GM12878 (cell line): ENCODE measurements at regions of chr14 and their contacts with region 1.

Region 1: GRCh38 chr14:100645192-100645990 is 58.2 kb upstream of the BEGAIN start:
- DNase-seq: peak; percentile 11
- ATAC-seq: peak; percentile 97
- H3K4me3 ChIP-seq: no peak overlapping the region
- H3K27ac ChIP-seq: no peak overlapping the region
- H3K4me1 ChIP-seq: peaks cover 6% of the 10 kb centered on the region
- H3K27me3 ChIP-seq: no peaks in the 10 kb centered on the region
- CTCF ChIP-seq: peak; percentile 73 to 90 (median 82)
- EP300 ChIP-seq: no peak
- POLR2A ChIP-seq: no peak
- RAD21 ChIP-seq: peak; percentile 79

Region 2: DNA sequence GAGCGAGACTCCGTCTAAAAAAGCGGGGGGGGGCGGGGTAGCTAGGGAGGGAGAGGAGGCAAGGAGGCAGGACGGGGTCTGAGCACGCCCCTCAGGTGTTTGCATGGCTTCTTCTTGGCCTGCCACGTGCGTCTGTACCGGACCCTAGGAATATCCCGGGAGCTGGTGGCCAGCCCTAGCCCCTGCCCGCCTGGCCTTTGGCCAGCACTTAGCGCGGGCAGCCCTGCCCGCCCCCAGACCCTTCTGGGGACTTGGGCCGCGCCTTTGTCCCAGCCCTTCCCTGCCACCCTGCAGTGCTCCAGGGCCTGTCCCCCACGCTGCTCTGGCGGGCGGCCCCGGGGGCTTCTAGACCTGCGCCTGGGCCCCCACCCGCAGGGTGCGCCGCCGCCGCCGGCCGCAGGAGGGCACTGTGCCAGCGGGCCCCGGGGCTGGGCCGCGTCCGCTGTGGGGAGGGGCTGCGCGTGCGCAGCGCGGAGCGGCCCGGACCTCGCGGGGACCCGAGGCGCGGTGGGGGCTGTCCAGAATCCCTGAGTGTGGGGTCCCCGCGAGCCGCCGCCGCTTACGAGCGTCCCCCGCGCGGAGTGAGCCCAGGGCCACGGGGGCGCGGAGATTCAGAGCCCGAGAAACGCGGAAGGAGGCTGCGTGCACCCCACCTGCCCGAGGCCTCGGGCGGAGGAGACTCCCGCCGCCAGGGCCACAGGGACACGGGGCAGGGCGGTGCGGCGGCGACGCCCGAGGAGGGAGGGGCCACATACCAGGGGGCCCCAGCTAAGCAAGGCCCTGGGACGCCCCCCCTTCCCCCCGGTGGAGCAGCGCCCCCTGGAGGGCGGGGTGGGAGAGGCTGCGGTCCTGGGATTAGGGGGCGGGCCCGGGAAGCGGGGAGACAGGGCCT is 360.1 kb before region 1 on chr14:
- CTCF ChIA-PET with region 1: interaction called, 4 read pairs
- POLR2A ChIA-PET with region 1: no interaction called
- RAD21 ChIA-PET with region 1: no interaction called
- SMC1A ChIA-PET with region 1: no interaction called
- in situ Hi-C with region 1: loop called (anchors 10 kb)
- intact Hi-C with region 1: no loop called
- DNase-seq: no peak
- ATAC-seq: peak; percentile 96
- H3K4me3 ChIP-seq: peak overlapping the region; percentile 84
- H3K27ac ChIP-seq: peak overlapping the region; percentile 63
- H3K4me1 ChIP-seq: no peaks in the 10 kb centered on the region
- H3K27me3 ChIP-seq: no peaks in the 10 kb centered on the region
- CTCF ChIP-seq: peak; percentile 62 to 93 (median 80)
- EP300 ChIP-seq: no peak
- POLR2A ChIP-seq: peak; percentile 86
- RAD21 ChIP-seq: peak; percentile 67

Region 3: DNA sequence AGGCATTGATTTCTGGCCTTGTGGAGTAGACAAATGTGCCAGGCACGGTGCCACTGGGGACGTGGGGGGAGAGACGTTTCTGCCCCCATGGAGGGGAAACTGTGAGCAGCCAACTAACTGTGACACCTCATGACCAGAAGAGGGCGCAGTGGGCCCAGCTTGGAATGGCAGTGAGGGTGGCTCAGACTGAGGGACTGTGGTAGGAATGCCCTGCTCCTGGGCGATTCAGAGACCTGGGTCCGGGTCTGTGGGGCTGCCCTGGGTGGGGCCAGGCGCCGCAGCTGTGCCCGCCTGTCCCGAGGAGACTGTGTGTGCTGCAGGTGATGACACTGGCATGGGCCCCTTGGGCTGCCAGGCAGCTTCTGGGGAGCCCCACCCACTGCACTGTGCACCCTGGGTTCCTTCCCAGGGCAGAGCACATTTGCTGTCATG is 261.6 kb before region 1 on chr14:
- CTCF ChIA-PET with region 1: interaction called, 241 read pairs
- POLR2A ChIA-PET with region 1: interaction called, 3 read pairs
- RAD21 ChIA-PET with region 1: interaction called, 93 read pairs
- SMC1A ChIA-PET with region 1: interaction called, 95 read pairs
- in situ Hi-C with region 1: loop called (anchors 5 kb)
- intact Hi-C with region 1: loop called (anchors 1 kb)
- DNase-seq: no peak
- ATAC-seq: peak; percentile 97
- H3K4me3 ChIP-seq: no peak overlapping the region
- H3K27ac ChIP-seq: no peak overlapping the region
- H3K4me1 ChIP-seq: no peaks in the 10 kb centered on the region
- H3K27me3 ChIP-seq: no peaks in the 10 kb centered on the region
- CTCF ChIP-seq: peak; percentile 86 to 90 (median 87)
- EP300 ChIP-seq: no peak
- POLR2A ChIP-seq: no peak
- RAD21 ChIP-seq: peak; percentile 85

Region 4: DNA sequence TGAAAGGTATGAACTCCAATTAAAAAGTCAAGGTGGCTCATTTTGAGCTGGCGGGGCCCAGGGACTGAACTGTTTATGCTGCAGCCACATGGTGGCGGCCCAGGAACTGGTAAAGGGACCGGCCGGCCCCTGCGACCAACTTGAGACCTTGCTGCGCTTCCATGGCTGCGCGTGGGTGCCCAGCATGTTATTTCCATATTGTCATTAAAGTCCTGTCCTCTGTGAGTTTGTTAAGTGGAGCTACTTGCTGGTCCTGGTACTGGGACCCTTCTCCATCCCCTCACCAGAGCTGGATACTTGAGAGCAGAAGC is 120.5 kb before region 1 on chr14:
- CTCF ChIA-PET with region 1: interaction called, 16 read pairs
- POLR2A ChIA-PET with region 1: no interaction called
- RAD21 ChIA-PET with region 1: interaction called, 15 read pairs
- SMC1A ChIA-PET with region 1: interaction called, 9 read pairs
- in situ Hi-C with region 1: no loop called
- intact Hi-C with region 1: loop called (anchors 2 kb)
- DNase-seq: no peak
- ATAC-seq: no peak
- H3K4me3 ChIP-seq: no peak overlapping the region
- H3K27ac ChIP-seq: no peak overlapping the region
- H3K4me1 ChIP-seq: no peaks in the 10 kb centered on the region
- H3K27me3 ChIP-seq: no peaks in the 10 kb centered on the region
- CTCF ChIP-seq: peak; percentile 14 to 23 (median 18); a peak in 3 of 6 replicates
- EP300 ChIP-seq: no peak
- POLR2A ChIP-seq: no peak
- RAD21 ChIP-seq: peak; percentile 29; the same call in 1 of the 2 replicates

Region 5: DNA sequence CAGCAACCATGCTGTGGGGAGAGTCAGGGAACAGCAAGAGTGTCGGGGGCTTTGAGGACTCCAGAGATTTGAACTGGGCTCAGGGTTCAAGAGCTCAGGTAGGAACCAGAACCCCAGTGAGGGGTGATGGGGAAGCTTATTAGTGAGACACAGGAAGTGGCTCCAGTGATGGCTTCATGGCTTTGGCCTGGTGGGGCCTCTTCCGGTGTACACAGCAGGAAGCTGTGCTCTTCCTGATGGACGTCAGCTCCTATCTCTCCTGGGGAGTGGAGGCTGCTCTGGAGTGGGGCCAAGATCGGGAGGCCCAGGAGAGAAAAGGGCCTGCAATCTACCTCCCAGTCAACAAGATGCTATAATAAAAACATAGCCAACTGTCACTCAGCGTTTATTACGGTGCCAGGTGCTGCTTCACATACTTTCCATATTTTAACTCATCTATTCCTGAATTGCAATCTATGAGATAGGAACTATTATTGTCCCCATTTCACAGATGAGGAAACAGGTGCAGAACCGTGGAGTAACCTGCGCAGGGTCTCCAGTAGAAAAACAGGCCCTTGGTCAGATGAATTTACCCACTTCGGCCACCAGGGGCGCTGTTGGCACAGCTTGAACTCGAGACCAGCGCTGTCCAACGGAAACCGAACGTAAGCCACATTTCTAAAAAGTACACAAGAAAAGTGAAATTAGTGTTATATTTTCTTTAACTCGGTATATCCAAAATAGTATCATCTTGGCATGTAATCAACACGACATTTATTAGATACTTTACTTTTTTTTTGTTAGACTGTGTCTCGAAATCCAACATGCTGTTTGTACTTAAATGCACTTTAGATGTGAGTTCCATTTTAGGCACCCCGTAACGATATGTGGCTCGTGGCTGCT is 17.7 kb after region 1 on chr14:
- CTCF ChIA-PET with region 1: interaction called, 20 read pairs
- POLR2A ChIA-PET with region 1: no interaction called
- RAD21 ChIA-PET with region 1: no interaction called
- SMC1A ChIA-PET with region 1: no interaction called
- in situ Hi-C with region 1: no loop called
- intact Hi-C with region 1: no loop called
- DNase-seq: no peak
- ATAC-seq: peak; percentile 68
- H3K4me3 ChIP-seq: no peak overlapping the region
- H3K27ac ChIP-seq: no peak overlapping the region
- H3K4me1 ChIP-seq: no peaks in the 10 kb centered on the region
- H3K27me3 ChIP-seq: no peaks in the 10 kb centered on the region; a peak in 1 of 4 replicates
- CTCF ChIP-seq: peak; percentile 61 to 82 (median 74)
- EP300 ChIP-seq: no peak
- POLR2A ChIP-seq: no peak
- RAD21 ChIP-seq: peak; percentile 36; the same call in 1 of the 2 replicates

Region 6: DNA sequence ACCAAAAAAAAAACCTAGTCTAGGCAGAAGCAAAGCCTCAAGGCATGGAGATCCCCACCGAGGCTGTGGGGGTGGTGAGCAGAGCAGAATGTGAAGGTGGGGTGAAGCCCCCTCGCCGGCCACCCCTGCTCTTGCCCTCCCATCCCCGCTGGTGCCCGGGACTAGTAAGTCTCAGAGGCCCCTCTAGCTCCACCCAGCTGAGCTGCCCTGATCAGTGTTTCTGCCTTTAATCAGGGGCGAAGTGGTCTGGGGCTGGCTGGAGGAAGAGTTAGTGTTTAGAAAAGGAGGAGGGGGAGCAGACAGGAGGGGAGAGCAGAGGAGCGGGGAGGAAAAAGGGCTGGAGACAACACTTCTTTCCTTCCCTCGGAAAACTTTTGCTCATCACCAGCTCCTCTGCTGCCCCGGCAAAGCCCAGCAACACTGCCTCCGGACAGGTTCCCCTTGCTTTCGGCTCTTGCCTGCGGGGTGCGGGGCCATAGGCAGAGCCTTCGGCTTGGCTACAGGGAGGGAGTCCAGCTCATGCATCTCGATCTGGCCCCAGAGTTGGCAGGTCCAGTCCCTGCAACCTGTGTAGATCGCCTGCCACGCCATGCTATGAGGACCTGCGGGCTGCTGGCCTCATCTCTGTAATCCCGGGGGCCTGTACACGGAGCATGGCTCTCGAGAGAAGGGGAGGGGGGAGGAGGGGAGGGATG is 77.9 kb after region 1 on chr14:
- CTCF ChIA-PET with region 1: no interaction called
- POLR2A ChIA-PET with region 1: no interaction called
- RAD21 ChIA-PET with region 1: no interaction called
- SMC1A ChIA-PET with region 1: no interaction called
- in situ Hi-C with region 1: no loop called
- intact Hi-C with region 1: no loop called
- DNase-seq: no peak
- ATAC-seq: no peak
- H3K4me3 ChIP-seq: no peak overlapping the region
- H3K27ac ChIP-seq: no peak overlapping the region
- H3K4me1 ChIP-seq: no peaks in the 10 kb centered on the region
- H3K27me3 ChIP-seq: peaks cover 0 to 2% of the 10 kb centered on the region in 2 experiments; a peak in 2 of 4 replicates
- CTCF ChIP-seq: no peak
- EP300 ChIP-seq: no peak
- POLR2A ChIP-seq: no peak
- RAD21 ChIP-seq: no peak